Tibial artery (tissue), 4 donors: ENCODE measurements at regions of chr18 and their contacts with region 1.

Region 1: DNA sequence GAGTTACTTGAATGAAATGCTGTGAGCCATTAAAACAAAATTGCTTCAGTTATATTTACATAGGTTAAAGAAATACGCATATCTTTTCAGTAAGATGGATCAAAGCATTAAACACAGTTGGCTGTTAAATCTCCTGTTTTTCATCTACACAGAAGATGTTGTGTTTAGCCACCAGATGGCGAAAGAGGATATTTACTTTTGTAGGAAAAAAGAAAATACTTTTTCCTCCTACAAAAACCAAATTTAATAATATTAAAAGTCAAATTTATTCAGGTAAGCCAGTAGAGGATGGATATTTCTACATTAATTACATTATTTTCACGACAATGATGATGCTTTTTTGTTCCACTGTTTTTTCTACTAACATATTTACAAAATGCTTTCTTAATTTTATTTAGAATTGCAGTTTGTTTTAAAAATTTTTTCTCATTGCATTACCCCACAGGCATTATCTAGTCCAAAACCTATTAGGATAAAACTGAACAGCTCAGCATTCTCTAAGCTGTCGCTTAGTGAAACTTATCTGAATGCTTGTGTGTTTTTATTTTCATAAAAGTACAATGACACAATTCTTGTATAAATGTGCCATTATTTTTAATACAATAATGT is 173.7 kb downstream of the ASXL3 start:
- DNase-seq: no peak
- H3K4me3 ChIP-seq: no peak overlapping the region
- H3K27ac ChIP-seq: no peak overlapping the region
- H3K4me1 ChIP-seq: no peaks in the 10 kb centered on the region
- H3K27me3 ChIP-seq: no peaks in the 10 kb centered on the region
- CTCF ChIP-seq: peak in 1 of 2 experiments; percentile 11

Region 2: GRCh38 chr18:33459612-33460011 is 292.1 kb before region 1 on chr18:
- intact Hi-C with region 1: loop called (anchors 10 kb)
- DNase-seq: no peak
- H3K4me3 ChIP-seq: no peak overlapping the region
- H3K27ac ChIP-seq: no peak overlapping the region
- H3K4me1 ChIP-seq: no peaks in the 10 kb centered on the region
- H3K27me3 ChIP-seq: no peaks in the 10 kb centered on the region
- CTCF ChIP-seq: no peak